ENCODE measurements at regions of chr10 and their contacts with region 1.

Region 1: DNA sequence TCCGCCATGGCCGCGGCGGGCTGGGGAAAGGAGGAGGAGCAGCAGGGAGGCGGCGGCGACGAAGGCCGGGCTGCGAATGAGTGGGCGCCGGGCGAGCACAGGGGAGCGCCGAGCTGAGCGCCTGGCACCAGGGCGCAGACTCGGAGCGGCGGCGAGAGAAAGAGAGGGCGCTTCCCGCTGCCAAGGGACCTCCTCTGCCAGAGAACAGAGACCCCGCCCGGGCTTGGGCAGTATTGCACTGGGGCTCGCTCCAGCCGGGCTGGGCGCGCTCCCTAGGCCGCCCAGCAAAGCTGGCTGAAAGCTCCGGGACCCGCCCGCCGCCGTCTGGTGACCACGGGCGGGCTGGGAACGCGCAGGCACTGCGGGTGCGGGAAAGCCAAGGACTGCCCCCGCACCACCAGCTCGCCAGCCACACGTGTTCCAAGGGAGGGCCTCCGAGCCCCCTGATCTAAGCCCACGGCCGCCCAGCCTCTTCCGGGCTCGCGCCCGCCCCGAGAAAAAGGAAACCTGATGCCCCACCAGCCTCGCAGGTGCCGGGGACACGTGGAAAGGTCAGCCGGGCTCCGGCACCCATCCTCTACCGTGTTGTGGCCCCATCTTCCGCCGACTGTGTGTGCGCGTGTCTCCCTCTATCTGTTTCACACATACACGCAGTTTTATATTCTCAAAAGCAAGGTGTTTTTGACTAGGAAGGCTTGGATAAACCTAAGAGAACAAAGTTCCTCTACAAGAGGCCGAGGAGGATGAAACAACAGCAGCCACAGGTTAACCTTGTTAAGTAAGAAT is at the start of gene CCDC6:
- DNase-seq: no peak
- ATAC-seq: peak; percentile 86
- H3K4me3 ChIP-seq: peak within 1 kb of the TSS; percentile 94
- H3K27ac ChIP-seq: peak within 1 kb of the TSS; percentile 88
- H3K4me1 ChIP-seq: peaks cover 8% of the 10 kb centered on the region; the same call in 1 of the 2 replicates
- H3K27me3 ChIP-seq: no peaks in the 10 kb centered on the region
- CTCF ChIP-seq: peak; percentile 63 to 84 (median 83)
- EP300 ChIP-seq: 0 out of 4 replicates have a peak, but pooled peaks of 1 of the 2 experiments have one; percentile 8
- POLR2A ChIP-seq: peak; percentile 86
- RAD21 ChIP-seq: peak; percentile 88
- polyA plus RNA-seq, gene CCDC6: 11.8 to 12.3 TPM

Region 2: GRCh38 chr10:59830601-59831259 is 75.9 kb before region 1 on chr10:
- CTCF ChIA-PET with region 1: interaction called, 71 read pairs
- POLR2A ChIA-PET with region 1: interaction called, 5 read pairs
- RAD21 ChIA-PET with region 1: interaction called, 32 read pairs
- SMC1A ChIA-PET with region 1: interaction called, 31 read pairs
- in situ Hi-C with region 1: no loop called
- intact Hi-C with region 1: loop called (anchors 1 kb)
- DNase-seq: no peak
- ATAC-seq: peak; percentile 53
- H3K4me3 ChIP-seq: no peak overlapping the region
- H3K27ac ChIP-seq: no peak overlapping the region
- H3K4me1 ChIP-seq: peaks cover 34% of the 10 kb centered on the region
- H3K27me3 ChIP-seq: no peaks in the 10 kb centered on the region
- CTCF ChIP-seq: peak; percentile 49 to 71 (median 61)
- EP300 ChIP-seq: no peak
- POLR2A ChIP-seq: no peak
- RAD21 ChIP-seq: peak; percentile 55

Region 3: DNA sequence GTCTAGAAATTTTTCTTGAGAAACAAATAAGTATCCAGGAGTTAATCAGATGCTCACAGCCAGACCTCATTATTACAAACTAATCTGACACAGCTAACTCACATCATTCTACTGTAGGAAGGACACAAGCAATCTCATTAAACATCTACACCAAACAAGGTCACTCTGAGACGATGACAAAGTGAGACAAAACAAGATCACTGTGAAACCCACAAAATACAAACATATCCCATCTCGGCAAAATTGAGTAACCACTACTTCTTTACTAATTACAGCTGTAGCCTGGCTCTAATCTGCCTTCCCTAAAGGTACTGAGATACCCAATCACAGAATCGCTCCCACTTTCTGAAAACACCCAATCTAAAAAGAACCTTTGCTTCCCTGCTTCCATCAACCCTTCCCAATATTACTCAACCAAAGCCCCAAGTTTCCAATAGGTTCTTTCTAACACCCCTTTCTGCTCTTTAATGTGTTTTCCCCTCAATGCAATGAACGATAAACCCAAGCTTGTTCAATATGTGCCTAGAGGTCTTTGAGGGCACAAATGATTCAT is 27.2 kb before region 1 on chr10:
- CTCF ChIA-PET with region 1: interaction called, 32 read pairs
- POLR2A ChIA-PET with region 1: interaction called, 8 read pairs
- RAD21 ChIA-PET with region 1: interaction called, 68 read pairs
- SMC1A ChIA-PET with region 1: interaction called, 20 read pairs
- in situ Hi-C with region 1: no loop called
- intact Hi-C with region 1: loop called (anchors 1 kb)
- DNase-seq: no peak
- ATAC-seq: peak; percentile 54
- H3K4me3 ChIP-seq: peak overlapping the region; percentile 46; the same call in 1 of the 2 replicates
- H3K27ac ChIP-seq: peak overlapping the region; percentile 77
- H3K4me1 ChIP-seq: peaks cover 50% of the 10 kb centered on the region
- H3K27me3 ChIP-seq: no peaks in the 10 kb centered on the region
- CTCF ChIP-seq: no peak
- EP300 ChIP-seq: no peak
- POLR2A ChIP-seq: no peak
- RAD21 ChIP-seq: no peak

Region 4: GRCh38 chr10:60032723-60033122 is 126.1 kb after region 1 on chr10:
- CTCF ChIA-PET with region 1: interaction called, 6 read pairs
- POLR2A ChIA-PET with region 1: interaction called, 6 read pairs
- RAD21 ChIA-PET with region 1: interaction called, 4 read pairs
- SMC1A ChIA-PET with region 1: interaction called, 3 read pairs
- in situ Hi-C with region 1: no loop called
- intact Hi-C with region 1: loop called (anchors 1 kb)
- DNase-seq: peak; percentile 23
- ATAC-seq: peak; percentile 83
- H3K4me3 ChIP-seq: no peak overlapping the region
- H3K27ac ChIP-seq: no peak overlapping the region
- H3K4me1 ChIP-seq: peaks cover 15% of the 10 kb centered on the region
- H3K27me3 ChIP-seq: no peaks in the 10 kb centered on the region; a peak in 1 of 4 replicates
- CTCF ChIP-seq: peak; percentile 56 to 71 (median 68)
- EP300 ChIP-seq: no peak
- POLR2A ChIP-seq: no peak
- RAD21 ChIP-seq: peak; percentile 79

Region 5: GRCh38 chr10:60237977-60238758 is 331.6 kb after region 1 on chr10:
- CTCF ChIA-PET with region 1: interaction called, 3 read pairs
- POLR2A ChIA-PET with region 1: no interaction called
- RAD21 ChIA-PET with region 1: no interaction called
- SMC1A ChIA-PET with region 1: interaction called, 4 read pairs
- in situ Hi-C with region 1: no loop called
- intact Hi-C with region 1: loop called (anchors 10 kb)
- DNase-seq: peak; percentile 28
- ATAC-seq: peak; percentile 79
- H3K4me3 ChIP-seq: peak overlapping the region; percentile 49
- H3K27ac ChIP-seq: peak overlapping the region; percentile 65; the same call in 1 of the 2 replicates
- H3K4me1 ChIP-seq: peaks cover 16% of the 10 kb centered on the region
- H3K27me3 ChIP-seq: no peaks in the 10 kb centered on the region
- CTCF ChIP-seq: peak; percentile 38 to 53 (median 48)
- EP300 ChIP-seq: no peak
- POLR2A ChIP-seq: no peak
- RAD21 ChIP-seq: peak; percentile 77